K562 (cell line): ENCODE measurements at regions of chr16 and their contacts with region 1.

Region 1: DNA sequence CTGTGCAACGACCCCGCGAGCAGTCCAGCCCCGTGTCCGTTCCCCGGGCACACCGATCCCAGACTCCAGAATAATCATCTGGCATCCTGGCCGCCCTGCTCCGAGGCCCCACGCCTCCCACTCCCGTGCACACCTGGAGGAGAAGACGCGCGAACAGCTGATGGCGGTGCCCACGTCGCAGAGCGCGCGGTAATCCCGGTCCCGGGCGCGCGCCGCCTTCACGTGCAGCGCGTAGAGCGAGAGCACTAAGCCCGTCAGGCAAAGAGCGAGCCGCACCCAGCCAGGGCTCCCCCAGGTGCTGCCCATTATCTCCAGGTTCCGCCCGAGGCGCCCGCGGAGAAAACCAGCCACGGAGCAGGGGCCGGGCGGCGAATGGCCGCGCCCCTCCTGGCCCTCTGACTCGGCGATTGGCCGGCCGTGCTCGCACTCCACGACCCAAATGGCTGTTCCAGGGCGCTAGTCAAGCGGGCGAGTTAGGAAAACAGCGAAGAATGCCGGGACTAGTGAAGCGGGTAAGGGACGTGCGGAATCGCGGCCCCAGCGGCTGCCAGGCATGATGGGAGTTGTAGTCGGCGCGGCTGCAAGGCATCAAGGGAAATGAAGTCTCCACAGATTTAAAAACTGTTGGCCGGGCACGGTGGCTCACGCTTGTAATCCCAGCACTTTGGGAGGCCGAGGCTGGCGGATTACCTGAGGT is at the start of gene VKORC1:
- DNase-seq: peak; percentile 91 to 98 (median 93)
- ATAC-seq: peak; percentile 96
- H3K4me3 ChIP-seq: peak within 1 kb of the TSS; percentile 79
- H3K27ac ChIP-seq: peak within 1 kb of the TSS; percentile 70
- H3K4me1 ChIP-seq: peaks cover 17 to 32% of the 10 kb centered on the region in 2 experiments; a peak in 4 of 5 replicates
- H3K27me3 ChIP-seq: no peaks in the 10 kb centered on the region
- CTCF ChIP-seq: no peak
- EP300 ChIP-seq: no peak
- POLR2A ChIP-seq: peak; percentile 77
- RAD21 ChIP-seq: no peak
- polyA plus RNA-seq, gene VKORC1: 30.0 to 47.3 TPM

Region 2: DNA sequence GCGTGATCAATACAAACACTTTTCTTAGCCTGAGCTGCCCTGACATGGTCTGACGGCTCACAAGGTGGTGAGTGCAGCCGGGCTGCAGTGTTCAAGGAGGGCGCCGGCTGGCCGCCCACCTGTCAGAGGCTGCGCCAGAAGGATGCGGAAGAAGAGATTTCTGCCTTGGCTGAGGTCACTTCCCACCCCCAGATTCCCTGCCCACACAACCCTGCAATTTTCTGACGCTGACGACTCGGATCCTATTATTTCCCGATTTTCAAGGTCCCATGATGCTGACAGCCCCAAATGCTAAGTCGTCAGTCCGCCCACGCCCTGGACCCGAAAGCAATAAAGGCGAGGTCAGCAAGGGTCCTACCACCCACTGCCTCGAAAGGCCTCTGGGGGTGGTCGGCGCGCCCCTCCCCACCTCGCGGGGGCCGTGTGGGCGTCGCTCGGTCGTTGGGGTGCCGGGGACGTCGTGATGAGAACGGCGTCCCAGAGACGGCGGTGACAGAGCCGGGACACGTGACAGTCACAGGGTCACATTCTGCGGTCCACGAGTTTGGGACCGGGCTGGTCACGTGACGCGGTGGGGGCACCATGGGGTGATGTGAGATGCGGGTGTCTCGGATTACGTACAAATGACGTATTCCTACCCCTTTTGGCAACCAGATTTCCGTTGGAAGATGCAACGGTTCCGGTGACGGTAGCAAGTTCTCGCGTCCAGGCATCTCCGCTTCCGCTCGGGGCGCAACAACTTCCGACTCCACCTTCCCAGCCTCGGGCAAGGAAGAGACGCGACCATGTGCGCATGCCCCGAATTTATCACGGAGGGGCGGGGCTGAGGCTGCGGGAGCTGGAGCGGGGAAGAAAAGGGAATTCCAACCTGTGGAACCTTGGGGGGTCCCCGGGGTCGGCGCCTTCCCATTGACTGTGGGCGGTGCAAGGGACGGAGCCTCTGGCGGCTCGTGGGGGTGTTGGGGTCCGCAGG is 61.5 kb before region 1 on chr16 and contains the start of gene STX4:
- CTCF ChIA-PET with region 1: no interaction called
- POLR2A ChIA-PET with region 1: no interaction called
- in situ Hi-C with region 1: no loop called
- intact Hi-C with region 1: loop called (anchors 5 kb)
- DNase-seq: peak; percentile 91 to 99 (median 96)
- ATAC-seq: peak; percentile 88
- H3K4me3 ChIP-seq: peak within 1 kb of the TSS; percentile 98
- H3K27ac ChIP-seq: peak within 1 kb of the TSS; percentile 91
- H3K4me1 ChIP-seq: peaks cover 16 to 20% of the 10 kb centered on the region in 2 experiments
- H3K27me3 ChIP-seq: no peaks in the 10 kb centered on the region
- CTCF ChIP-seq: no peak; a peak in 1 of 6 replicates
- EP300 ChIP-seq: peak; percentile 81
- POLR2A ChIP-seq: peak; percentile 68
- RAD21 ChIP-seq: 0 out of 4 replicates have a peak, but pooled peaks of 1 of the 2 experiments have one; percentile 2
- polyA plus RNA-seq, gene STX4: 3.2 to 7.4 TPM

Region 3: DNA sequence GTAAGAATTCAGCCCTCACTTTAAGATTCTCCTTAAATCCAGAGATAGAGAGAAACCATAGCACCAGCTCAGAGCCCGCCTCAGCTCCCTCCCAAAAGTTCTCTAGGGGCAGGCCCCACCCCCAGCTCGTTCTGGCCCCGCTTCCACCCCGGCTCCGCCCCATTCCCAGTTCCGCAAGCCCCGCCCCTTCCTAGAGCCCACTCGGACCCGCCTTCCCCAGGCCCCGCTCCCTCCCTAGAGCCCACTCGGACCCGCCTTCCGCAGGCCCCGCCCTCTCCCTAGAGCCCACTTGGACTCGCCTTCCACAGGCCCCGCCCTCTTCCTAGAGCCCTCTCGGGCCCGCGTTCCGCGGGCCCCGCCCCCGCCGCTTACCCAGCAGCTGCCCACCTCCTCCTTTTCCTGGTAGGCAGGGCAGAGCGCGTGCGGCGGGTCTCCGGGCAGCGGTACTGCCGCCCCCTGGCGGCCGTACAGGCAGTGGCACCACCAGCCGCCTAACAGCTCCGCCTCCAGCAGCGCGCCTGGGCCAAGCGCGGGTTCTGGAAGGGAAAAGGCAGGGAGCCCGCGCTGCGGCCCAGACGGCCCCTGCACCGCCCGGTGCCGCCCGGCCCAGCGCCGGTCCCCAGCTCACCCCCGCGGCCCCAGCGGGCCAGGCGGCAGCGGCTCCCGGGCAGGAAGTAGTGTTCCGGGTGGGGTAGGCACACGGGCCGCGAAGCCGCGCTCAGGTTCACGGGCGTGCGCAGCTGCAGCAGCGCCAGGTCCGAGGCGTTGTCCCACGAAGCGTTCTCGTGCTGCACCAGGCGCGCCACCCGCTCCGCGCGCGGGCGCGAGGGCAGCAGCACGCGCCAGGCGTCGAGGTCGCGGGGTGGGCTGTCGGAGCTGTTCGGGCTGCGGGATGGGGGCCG is 47.8 kb after region 1 on chr16:
- CTCF ChIA-PET with region 1: no interaction called
- POLR2A ChIA-PET with region 1: interaction called, 4 read pairs
- in situ Hi-C with region 1: no loop called
- intact Hi-C with region 1: loop called (anchors 1 kb)
- DNase-seq: peak; percentile 99 to 100 (median 100)
- ATAC-seq: peak; percentile 97
- H3K4me3 ChIP-seq: peak overlapping the region; percentile 28
- H3K27ac ChIP-seq: peak overlapping the region; percentile 67
- H3K4me1 ChIP-seq: peaks cover 14 to 43% of the 10 kb centered on the region in 2 experiments
- H3K27me3 ChIP-seq: peaks cover 13 to 19% of the 10 kb centered on the region in 2 experiments; a peak in 4 of 5 replicates
- CTCF ChIP-seq: peak; percentile 89 to 95 (median 93)
- EP300 ChIP-seq: no peak
- POLR2A ChIP-seq: peak; percentile 65
- RAD21 ChIP-seq: peak; percentile 91 to 94

Region 4: GRCh38 chr16:31206776-31207175 is 112.2 kb after region 1 on chr16:
- CTCF ChIA-PET with region 1: no interaction called
- POLR2A ChIA-PET with region 1: no interaction called
- in situ Hi-C with region 1: no loop called
- intact Hi-C with region 1: no loop called
- DNase-seq: no peak
- ATAC-seq: no peak
- H3K4me3 ChIP-seq: no peak overlapping the region
- H3K27ac ChIP-seq: no peak overlapping the region
- H3K4me1 ChIP-seq: peaks cover 7 to 16% of the 10 kb centered on the region in 2 experiments; a peak in 4 of 5 replicates
- H3K27me3 ChIP-seq: peaks cover 0 to 11% of the 10 kb centered on the region in 2 experiments; a peak in 2 of 5 replicates
- CTCF ChIP-seq: no peak
- EP300 ChIP-seq: no peak
- POLR2A ChIP-seq: no peak
- RAD21 ChIP-seq: no peak